ENCODE measurements at regions of chr17 and their contacts with region 1.

Region 1: GRCh38 chr17:40399185-40399584 is 18.5 kb downstream of the TOP2A start:
- DNase-seq: no peak
- H3K4me3 Mint-ChIP-seq: no peak overlapping the region
- H3K27ac Mint-ChIP-seq: peak overlapping the region; percentile 54
- H3K4me1 Mint-ChIP-seq: peaks cover 18% of the 10 kb centered on the region
- H3K27me3 Mint-ChIP-seq: no peaks in the 10 kb centered on the region

Region 2: DNA sequence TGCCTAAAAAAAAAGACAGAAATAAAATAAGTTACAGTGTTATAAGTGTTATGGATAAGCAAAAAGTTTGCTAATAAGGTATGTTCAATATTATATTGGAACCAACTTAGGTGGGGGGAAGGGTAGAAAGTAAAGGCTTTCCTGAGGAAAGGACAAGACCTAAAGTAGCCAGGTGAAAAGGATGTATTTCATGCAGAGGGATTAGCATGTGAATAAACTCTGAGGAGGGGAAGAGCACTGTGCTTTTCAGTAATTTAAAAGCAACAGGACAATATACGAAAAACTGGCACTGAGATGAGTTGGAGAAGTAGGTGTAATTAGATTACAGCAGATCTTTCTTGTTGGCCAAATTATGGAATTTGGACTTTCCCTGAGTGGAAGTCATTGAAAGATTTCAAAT is 10.9 kb after region 1 on chr17:
- CTCF ChIA-PET with region 1: interaction called, 41 read pairs
- POLR2A ChIA-PET with region 1: interaction called, 5 read pairs
- intact Hi-C with region 1: no loop called
- DNase-seq: no peak
- H3K4me3 Mint-ChIP-seq: no peak overlapping the region
- H3K27ac Mint-ChIP-seq: no peak overlapping the region
- H3K4me1 Mint-ChIP-seq: no peaks in the 10 kb centered on the region
- H3K27me3 Mint-ChIP-seq: no peaks in the 10 kb centered on the region

Region 3: GRCh38 chr17:40499551-40500174 is 100.5 kb after region 1 on chr17:
- CTCF ChIA-PET with region 1: no interaction called
- POLR2A ChIA-PET with region 1: no interaction called
- intact Hi-C with region 1: no loop called
- DNase-seq: no peak
- H3K4me3 Mint-ChIP-seq: no peak overlapping the region
- H3K27ac Mint-ChIP-seq: no peak overlapping the region
- H3K4me1 Mint-ChIP-seq: peaks cover 4% of the 10 kb centered on the region
- H3K27me3 Mint-ChIP-seq: peaks cover 1% of the 10 kb centered on the region

Measured in activated CD4-positive, alpha-beta memory T cell treated with anti-CD3 and anti-CD28 coated beads for 36 hours (primary cell).